ENCODE measurements at regions of chr16 and their contacts with region 1.

Region 1: GRCh38 chr16:90004577-90004976 is 14.7 kb downstream of the DBNDD1 start:
- DNase-seq: no peak
- ATAC-seq: no peak
- H3K4me3 ChIP-seq: no peak overlapping the region
- H3K27ac ChIP-seq: no peak overlapping the region
- H3K4me1 ChIP-seq: no peaks in the 10 kb centered on the region
- H3K27me3 ChIP-seq: no peaks in the 10 kb centered on the region
- CTCF ChIP-seq: no peak

Region 2: GRCh38 chr16:90020838-90021382 is 16.3 kb after region 1 on chr16:
- CTCF ChIA-PET with region 1: no interaction called
- POLR2A ChIA-PET with region 1: interaction called, 15 read pairs
- in situ Hi-C with region 1: no loop called
- intact Hi-C with region 1: no loop called
- DNase-seq: no peak
- ATAC-seq: no peak
- H3K4me3 ChIP-seq: peak overlapping the region in 1 of 2 experiments; percentile 65; a peak in 3 of 4 replicates
- H3K27ac ChIP-seq: peak overlapping the region; percentile 92
- H3K4me1 ChIP-seq: peaks cover 23% of the 10 kb centered on the region
- H3K27me3 ChIP-seq: no peaks in the 10 kb centered on the region
- CTCF ChIP-seq: no peak

Measured in Panc1 (cell line).